ENCODE measurements at regions of chr6 and their contacts with region 1.

Region 1: GRCh38 chr6:47413752-47414422 is 63.7 kb upstream of the CD2AP start:
- DNase-seq: peak; percentile 23
- H3K4me3 ChIP-seq: peak overlapping the region; percentile 49
- H3K27ac ChIP-seq: no peak overlapping the region
- H3K27me3 ChIP-seq: no peaks in the 10 kb centered on the region
- CTCF ChIP-seq: peak; percentile 93

Region 2: GRCh38 chr6:47221565-47221964 is 192.3 kb before region 1 on chr6:
- CTCF ChIA-PET with region 1: no interaction called
- POLR2A ChIA-PET with region 1: no interaction called
- DNase-seq: no peak
- H3K4me3 ChIP-seq: no peak overlapping the region
- H3K27ac ChIP-seq: no peak overlapping the region
- H3K27me3 ChIP-seq: no peaks in the 10 kb centered on the region
- CTCF ChIP-seq: no peak

Region 3: DNA sequence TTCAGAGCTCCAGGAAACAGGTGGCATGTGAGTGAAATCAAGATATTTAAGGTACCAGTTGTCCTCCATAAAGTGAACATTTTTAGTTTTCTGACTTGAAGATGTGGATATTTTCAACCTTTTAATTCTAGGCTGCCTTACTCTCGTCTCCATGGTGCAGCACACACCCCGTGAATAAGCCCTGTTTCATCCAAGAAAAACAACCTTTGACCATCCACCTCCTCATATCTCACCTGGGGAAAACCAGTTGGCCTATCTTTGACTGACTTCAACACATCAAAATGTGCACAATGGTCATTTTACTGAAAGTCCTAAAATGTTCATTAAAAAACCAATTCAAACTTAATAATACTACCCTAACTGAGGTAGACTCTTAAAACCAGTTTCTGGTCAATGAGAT is 10.1 kb before region 1 on chr6:
- CTCF ChIA-PET with region 1: interaction called, 14 read pairs
- POLR2A ChIA-PET with region 1: no interaction called
- DNase-seq: no peak
- H3K4me3 ChIP-seq: no peak overlapping the region
- H3K27ac ChIP-seq: no peak overlapping the region
- H3K27me3 ChIP-seq: peaks cover 3% of the 10 kb centered on the region
- CTCF ChIP-seq: no peak

Region 4: GRCh38 chr6:47524136-47524845 is 110.4 kb after region 1 on chr6:
- CTCF ChIA-PET with region 1: no interaction called
- POLR2A ChIA-PET with region 1: no interaction called
- DNase-seq: no peak
- H3K4me3 ChIP-seq: no peak overlapping the region
- H3K27ac ChIP-seq: no peak overlapping the region
- H3K27me3 ChIP-seq: no peaks in the 10 kb centered on the region
- CTCF ChIP-seq: no peak

Region 5: DNA sequence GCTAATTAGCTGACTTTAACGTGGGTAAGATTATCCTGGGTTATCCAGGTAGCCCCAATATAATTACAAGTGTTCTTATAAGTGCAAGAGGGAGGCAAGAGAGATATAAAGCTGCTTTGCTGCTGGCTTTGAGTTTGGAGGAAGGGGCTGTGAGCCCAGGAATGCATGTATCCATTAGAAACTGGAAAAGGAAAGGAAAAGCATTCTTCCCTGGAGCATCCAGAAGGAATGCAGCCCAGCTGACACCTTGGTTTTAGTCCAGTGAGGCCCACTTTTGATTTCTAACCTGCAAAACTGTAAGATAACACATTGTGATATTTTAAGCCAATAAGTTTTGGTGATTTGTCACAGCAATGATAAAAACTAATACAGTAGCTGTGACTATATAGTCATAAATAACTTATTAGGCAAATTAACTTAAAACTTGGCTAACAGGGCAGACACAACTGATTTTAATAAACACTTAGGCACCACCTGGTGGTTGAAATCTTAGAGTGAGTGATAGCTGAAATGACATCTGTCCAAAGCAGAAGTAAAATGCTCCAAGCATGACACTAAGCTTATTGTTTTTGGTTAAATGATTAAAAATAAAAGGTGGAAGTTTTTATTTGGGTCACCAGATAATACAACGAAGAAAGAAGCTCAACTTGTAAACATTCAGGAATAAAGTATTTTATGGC is 320.1 kb after region 1 on chr6:
- CTCF ChIA-PET with region 1: interaction called, 12 read pairs
- POLR2A ChIA-PET with region 1: no interaction called
- DNase-seq: no peak
- H3K4me3 ChIP-seq: no peak overlapping the region
- H3K27ac ChIP-seq: no peak overlapping the region
- H3K27me3 ChIP-seq: no peaks in the 10 kb centered on the region
- CTCF ChIP-seq: peak; percentile 18; the same call in 1 of the 2 replicates

Region 6: DNA sequence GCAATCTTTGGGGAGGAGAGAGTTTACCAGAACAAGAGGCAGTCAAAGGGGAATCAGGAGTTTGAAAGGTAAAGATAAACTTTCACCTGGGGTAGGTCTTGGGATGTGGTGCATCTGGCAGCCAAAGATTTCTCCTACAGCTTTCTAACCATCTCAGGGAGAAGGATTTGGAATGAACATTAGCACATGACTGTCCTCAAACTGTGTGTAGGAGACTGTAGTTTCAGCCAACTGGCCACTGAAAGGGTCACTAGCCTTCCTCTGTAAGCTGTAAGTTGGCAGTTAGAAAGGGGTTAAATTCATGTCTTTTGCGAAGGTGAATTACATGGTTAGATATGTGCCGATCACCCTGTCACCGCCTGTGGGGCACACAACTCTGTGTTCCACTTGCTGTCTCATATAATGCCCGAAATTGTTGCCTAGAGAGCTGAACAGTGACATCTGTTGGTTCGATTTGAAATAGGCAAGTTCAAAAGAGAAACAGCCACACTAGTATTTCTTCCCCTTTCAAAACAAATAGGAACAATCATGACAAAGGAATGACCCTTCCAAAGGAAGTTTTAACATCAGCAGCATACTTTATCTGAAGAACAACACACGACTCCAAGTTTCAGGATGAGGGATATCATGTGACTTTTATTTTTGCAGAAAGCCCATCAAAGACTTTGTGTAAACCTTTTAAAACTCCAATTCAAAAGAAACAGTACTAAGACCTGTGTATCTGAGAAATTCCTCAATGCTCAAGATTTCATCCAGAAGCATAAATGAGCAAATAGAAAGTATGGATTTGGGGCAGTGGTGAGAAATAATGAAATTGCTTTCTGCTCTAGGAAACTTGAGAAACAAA is 366.8 kb after region 1 on chr6:
- CTCF ChIA-PET with region 1: interaction called, 53 read pairs
- POLR2A ChIA-PET with region 1: no interaction called
- DNase-seq: peak; percentile 38
- H3K4me3 ChIP-seq: no peak overlapping the region
- H3K27ac ChIP-seq: no peak overlapping the region
- H3K27me3 ChIP-seq: peaks cover 1% of the 10 kb centered on the region
- CTCF ChIP-seq: peak; percentile 80